Caco-2 (cell line): ENCODE measurements at regions of chr1 and their contacts with region 1.

Region 1: GRCh38 chr1:64917328-64917861 is 49.0 kb downstream of the JAK1 start:
- DNase-seq: no peak
- H3K4me3 ChIP-seq: no peak overlapping the region
- H3K4me3 Mint-ChIP-seq: no peak overlapping the region
- H3K27ac Mint-ChIP-seq: peak overlapping the region; percentile 92
- H3K4me1 ChIP-seq: peaks cover 50% of the 10 kb centered on the region
- H3K4me1 Mint-ChIP-seq: peaks cover 33% of the 10 kb centered on the region
- H3K27me3 ChIP-seq: no peaks in the 10 kb centered on the region
- H3K27me3 Mint-ChIP-seq: no peaks in the 10 kb centered on the region
- CTCF ChIP-seq: no peak

Region 2: GRCh38 chr1:64487061-64487460 is 430.3 kb before region 1 on chr1:
- CTCF ChIA-PET with region 1: no interaction called
- POLR2A ChIA-PET with region 1: no interaction called
- intact Hi-C with region 1: no loop called
- DNase-seq: no peak
- H3K4me3 ChIP-seq: no peak overlapping the region
- H3K4me3 Mint-ChIP-seq: no peak overlapping the region
- H3K27ac Mint-ChIP-seq: no peak overlapping the region
- H3K4me1 ChIP-seq: peaks cover 13% of the 10 kb centered on the region; the same call in 1 of the 2 replicates
- H3K4me1 Mint-ChIP-seq: peaks cover 19% of the 10 kb centered on the region
- H3K27me3 ChIP-seq: no peaks in the 10 kb centered on the region
- H3K27me3 Mint-ChIP-seq: no peaks in the 10 kb centered on the region
- CTCF ChIP-seq: no peak

Region 3: DNA sequence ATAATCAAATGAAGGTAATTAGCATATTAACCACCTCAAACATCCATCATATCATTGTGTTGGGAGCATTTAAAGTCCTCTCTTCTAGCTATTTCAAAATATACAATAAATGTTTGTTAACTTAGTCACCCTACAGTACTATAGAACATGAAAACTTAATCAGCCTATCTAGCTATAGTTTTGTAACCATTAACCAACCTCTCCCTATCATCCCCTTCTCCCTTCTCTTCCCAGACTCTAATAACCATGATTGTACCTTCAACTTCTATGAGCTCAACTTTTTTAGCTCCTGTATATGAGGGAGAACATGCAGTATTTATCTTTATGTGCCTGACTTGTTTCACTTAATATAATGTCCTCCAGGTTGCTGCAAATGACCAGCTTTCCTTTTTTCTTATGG is 118.5 kb before region 1 on chr1:
- CTCF ChIA-PET with region 1: no interaction called
- POLR2A ChIA-PET with region 1: no interaction called
- intact Hi-C with region 1: no loop called
- DNase-seq: no peak
- H3K4me3 ChIP-seq: no peak overlapping the region
- H3K4me3 Mint-ChIP-seq: no peak overlapping the region
- H3K27ac Mint-ChIP-seq: no peak overlapping the region
- H3K4me1 ChIP-seq: no peaks in the 10 kb centered on the region
- H3K4me1 Mint-ChIP-seq: no peaks in the 10 kb centered on the region
- H3K27me3 ChIP-seq: no peaks in the 10 kb centered on the region
- H3K27me3 Mint-ChIP-seq: no peaks in the 10 kb centered on the region
- CTCF ChIP-seq: no peak

Region 4: DNA sequence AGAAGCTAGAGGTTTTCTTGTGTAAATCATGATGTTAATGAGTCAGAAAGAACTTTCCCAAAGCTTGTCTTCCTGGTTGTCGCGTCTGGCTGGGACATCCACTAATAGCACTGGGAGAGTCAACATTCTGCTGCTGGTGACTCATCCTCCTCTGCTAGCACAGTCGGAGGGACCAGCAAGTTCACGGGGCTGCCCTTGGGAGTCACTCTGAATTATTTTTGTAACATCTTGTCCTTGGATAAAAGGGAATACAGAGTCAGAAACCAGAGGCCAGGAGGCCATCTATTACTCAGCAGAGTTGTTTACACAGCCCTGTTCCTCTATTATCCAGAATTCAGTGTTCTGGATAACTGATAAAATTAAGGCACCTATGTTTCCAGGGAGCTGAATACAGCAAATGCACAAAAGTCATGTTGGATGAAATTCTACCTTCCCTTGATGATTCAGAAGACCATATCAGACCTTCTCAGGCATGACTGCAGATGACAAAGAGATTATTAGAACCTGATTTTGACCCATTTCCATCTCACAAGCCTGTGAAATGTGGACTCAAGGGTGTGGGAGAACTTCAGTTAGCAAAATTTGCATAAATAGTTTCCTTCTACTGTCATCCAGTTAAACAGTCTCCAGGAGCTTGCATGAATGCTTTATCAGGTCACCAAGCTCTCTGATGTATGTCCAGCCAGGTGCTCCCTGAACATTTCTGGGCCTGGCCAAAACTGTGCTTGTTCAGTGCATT is 19.1 kb before region 1 on chr1:
- CTCF ChIA-PET with region 1: no interaction called
- POLR2A ChIA-PET with region 1: no interaction called
- intact Hi-C with region 1: loop called (anchors 1 kb)
- DNase-seq: peak; percentile 67 to 78
- H3K4me3 ChIP-seq: no peak overlapping the region
- H3K4me3 Mint-ChIP-seq: no peak overlapping the region
- H3K27ac Mint-ChIP-seq: peak overlapping the region; percentile 52
- H3K4me1 ChIP-seq: peaks cover 49% of the 10 kb centered on the region
- H3K4me1 Mint-ChIP-seq: peaks cover 32% of the 10 kb centered on the region
- H3K27me3 ChIP-seq: no peaks in the 10 kb centered on the region
- H3K27me3 Mint-ChIP-seq: no peaks in the 10 kb centered on the region
- CTCF ChIP-seq: no peak

Region 5: DNA sequence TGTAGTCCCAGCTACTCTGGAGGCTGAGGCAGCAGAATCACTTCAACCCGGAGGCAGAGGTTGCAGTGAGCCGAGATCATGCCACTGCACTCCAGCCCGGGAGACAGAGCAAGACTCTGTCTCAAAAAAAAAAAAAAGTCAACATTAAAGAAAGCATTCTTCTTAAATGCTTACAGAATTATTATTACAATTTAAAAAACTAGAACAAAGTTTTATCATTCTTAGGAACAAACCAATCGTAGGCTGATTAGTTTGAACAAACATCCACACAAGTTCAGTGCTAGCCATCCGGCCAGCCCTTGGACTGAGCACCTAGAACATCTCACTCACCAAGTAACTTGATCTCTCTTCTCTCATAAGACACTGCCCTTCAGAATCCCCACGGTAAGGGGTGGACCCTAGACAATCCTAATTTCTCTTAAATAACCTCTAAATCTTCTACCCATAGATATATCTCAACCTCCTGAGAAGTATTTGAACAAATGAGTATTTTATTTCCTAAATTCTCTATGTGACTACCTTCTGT is 33.0 kb after region 1 on chr1:
- CTCF ChIA-PET with region 1: no interaction called
- POLR2A ChIA-PET with region 1: no interaction called
- intact Hi-C with region 1: loop called (anchors 5 kb)
- DNase-seq: no peak
- H3K4me3 ChIP-seq: no peak overlapping the region
- H3K4me3 Mint-ChIP-seq: no peak overlapping the region
- H3K27ac Mint-ChIP-seq: peak overlapping the region; percentile 76
- H3K4me1 ChIP-seq: peaks cover 38% of the 10 kb centered on the region
- H3K4me1 Mint-ChIP-seq: peaks cover 15% of the 10 kb centered on the region
- H3K27me3 ChIP-seq: no peaks in the 10 kb centered on the region
- H3K27me3 Mint-ChIP-seq: no peaks in the 10 kb centered on the region
- CTCF ChIP-seq: no peak